Vagina (tissue), 2 donors: ENCODE measurements at regions of chr3 and their contacts with region 1.

Region 1: DNA sequence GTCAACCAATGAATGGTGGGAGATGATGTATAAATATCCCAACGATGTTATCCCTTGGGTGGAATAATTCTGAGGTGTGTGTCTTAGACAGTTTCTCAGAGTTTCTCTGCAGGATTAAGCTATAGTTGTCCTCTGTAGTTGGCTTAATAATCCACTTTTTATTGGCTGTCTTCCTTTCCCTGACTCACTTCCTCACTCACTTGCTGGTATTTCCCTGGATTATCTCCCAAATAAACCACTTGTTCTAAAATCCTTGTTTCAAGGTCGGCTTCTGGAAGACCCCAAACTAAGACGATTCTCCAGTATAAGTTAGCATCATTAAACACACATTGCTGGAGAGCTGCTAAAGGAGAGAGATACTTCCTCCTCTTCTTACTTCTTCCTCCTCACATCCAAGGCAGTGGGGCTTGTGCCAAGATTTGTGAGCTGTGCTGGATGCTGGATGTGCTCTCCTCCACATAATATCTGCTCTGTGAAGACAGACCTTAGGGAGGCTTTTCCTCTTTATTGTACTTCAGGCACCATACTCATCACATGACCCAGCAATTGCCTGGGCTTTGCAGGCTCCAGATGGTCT is 22.5 kb upstream of the ROPN1 start:
- DNase-seq: no peak
- H3K4me3 ChIP-seq: no peak overlapping the region
- H3K27ac ChIP-seq: no peak overlapping the region
- H3K4me1 ChIP-seq: no peaks in the 10 kb centered on the region
- H3K27me3 ChIP-seq: no peaks in the 10 kb centered on the region
- CTCF ChIP-seq: no peak
- POLR2A ChIP-seq: no peak

Region 2: DNA sequence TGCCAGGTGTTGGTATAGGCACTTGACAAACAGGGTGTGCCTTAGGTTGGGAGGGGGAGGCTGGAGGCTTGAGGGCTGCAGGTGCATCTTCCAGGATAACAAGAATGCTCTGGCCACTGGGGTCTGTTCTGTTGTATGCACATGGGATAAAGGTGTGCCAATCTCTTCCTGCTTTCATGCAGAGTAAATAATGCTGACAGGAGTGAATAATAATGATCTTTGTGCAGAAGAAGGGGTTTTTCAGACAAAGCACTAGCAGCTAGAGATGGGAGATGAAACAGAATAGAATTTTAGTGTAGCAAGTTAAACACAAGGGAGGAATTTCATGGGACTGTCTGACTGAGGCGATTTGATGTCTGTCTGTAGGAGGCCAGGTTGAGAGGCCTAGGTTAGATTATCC is 20.6 kb before region 1 on chr3:
- intact Hi-C with region 1: no loop called
- DNase-seq: no peak
- H3K4me3 ChIP-seq: no peak overlapping the region
- H3K27ac ChIP-seq: no peak overlapping the region
- H3K4me1 ChIP-seq: no peaks in the 10 kb centered on the region
- H3K27me3 ChIP-seq: no peaks in the 10 kb centered on the region
- CTCF ChIP-seq: no peak
- POLR2A ChIP-seq: no peak

Region 3: DNA sequence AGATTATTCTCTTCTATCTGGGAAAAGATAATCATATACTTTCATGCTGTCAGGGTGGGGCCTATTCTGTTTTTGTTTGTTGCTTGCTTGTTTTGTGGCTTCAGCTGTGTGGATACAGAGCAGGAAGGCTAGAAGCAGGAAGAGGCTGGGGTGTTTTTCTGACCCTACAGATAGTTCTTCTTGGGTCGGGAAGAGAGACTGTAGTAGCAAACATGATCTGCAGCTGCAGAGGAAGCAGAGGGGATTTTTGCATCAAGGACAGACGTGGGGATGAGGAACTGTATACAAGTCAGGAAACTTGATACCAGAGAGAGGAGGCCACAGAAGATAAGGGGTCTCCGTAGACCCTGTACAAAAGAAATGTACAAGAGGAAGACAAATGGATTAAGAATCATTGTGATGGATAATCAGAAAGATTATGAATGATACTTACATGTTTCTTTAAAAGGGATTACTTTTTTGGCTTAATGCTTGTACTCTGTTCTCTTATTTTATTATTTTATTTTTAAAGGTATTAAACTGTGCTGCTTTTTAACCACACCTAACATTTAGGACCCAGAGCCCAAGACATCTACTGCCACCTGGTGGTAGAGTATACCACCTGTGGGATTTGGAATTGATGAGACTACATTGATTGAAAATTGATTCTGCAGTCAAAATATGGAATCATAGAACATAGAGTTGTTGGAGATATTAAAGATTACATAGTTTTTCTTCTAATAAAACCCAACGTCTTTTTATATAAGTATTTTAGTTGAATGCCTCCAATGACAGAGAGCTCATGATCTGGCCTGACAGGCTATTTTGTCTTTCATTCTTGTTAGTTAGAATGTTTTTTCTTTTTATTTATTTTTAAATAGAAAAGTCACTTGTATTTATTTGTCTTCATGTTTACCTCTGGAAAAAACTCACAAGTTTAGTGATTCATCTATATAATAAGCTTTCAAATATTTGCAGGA is 64.8 kb after region 1 on chr3:
- intact Hi-C with region 1: loop called (anchors 5 kb)
- DNase-seq: peak in 1 of 2 donors; percentile 58
- H3K4me3 ChIP-seq: no peak overlapping the region
- H3K27ac ChIP-seq: no peak overlapping the region
- H3K4me1 ChIP-seq: peaks cover 4% of the 10 kb centered on the region
- H3K27me3 ChIP-seq: no peaks in the 10 kb centered on the region
- CTCF ChIP-seq: peak; percentile 7 to 69 (median 50)
- POLR2A ChIP-seq: no peak

Region 4: DNA sequence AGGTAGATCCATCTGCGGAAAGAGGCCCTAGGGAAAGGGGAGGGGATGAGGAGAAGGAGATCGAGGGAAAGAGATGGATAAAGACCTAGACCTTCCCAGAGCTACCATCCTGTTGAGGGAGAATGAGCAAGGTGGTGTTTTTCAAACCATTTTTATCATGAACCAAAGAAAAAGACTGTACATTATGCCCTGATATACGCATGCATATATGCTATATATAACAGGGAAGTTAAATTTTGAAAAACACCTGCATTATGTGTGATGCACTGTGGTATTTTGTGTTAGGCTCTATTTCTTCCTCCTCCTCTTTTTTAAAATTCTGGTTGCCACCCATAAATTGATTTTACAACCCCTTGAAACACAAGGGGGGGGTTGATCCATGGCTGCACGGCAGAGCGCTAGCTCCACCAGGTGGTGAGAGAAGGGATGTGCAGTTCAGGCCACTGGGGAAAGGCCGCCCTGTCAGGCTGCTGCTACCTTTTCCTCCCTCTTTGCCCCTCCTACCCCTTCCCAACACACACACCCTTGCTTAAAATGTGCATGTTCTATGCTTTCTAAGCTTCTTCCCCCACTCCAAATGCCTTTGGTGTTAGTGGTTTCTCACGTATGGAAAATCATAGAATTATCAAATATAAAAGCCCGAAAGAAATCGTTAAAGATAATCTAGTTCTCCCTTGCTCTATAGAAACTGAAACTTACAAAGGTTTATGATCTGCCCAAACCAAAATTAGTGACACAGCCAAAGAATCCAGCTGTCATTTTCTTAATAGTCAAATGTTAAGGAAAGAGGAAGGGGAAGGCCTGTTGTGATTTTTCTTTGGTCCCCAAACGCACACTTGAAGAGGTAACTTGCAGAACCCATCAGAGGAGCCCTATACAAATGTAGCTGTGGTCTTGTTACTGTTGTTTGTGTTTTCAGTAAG is 453.8 kb after region 1 on chr3:
- intact Hi-C with region 1: loop called (anchors 2 kb)
- DNase-seq: no peak
- H3K4me3 ChIP-seq: no peak overlapping the region
- H3K27ac ChIP-seq: no peak overlapping the region
- H3K4me1 ChIP-seq: no peaks in the 10 kb centered on the region
- H3K27me3 ChIP-seq: no peaks in the 10 kb centered on the region
- CTCF ChIP-seq: peak; percentile 60 to 77 (median 73)
- POLR2A ChIP-seq: no peak

Region 5: GRCh38 chr3:125055913-125056745 is 1041.7 kb after region 1 on chr3 and contains the start of gene HEG1:
- intact Hi-C with region 1: no loop called
- DNase-seq: peak in 1 of 2 donors; percentile 92
- H3K4me3 ChIP-seq: peak within 1 kb of the TSS; percentile 72 to 88
- H3K27ac ChIP-seq: peak within 1 kb of the TSS; percentile 95
- H3K4me1 ChIP-seq: peaks cover 51% of the 10 kb centered on the region
- H3K27me3 ChIP-seq: no peaks in the 10 kb centered on the region
- CTCF ChIP-seq: no peak
- POLR2A ChIP-seq: peak in 1 of 2 donors; percentile 74
- total RNA-seq, gene HEG1: 47.1 TPM

Region 6: DNA sequence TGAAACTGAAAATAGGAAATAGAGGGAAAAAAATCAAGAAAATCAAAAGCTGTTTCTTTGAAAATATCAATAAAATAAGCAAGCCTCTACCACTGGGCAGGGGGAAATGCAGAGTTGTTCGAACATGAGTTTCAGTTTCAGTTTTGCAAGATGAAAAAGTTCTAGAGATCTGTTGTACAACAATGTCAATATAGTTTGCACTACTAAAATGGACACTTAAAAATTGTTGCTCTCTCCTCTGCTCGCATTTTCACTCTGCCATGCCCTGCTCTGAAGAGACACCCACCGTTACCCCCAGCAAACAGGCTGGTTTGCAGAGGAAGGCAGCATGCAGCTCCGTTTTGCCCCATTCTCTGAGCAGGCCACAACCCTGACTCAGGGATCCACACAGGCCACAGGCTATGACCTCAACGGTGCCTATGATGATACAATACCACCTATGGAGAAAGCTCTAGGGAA is 1296.2 kb after region 1 on chr3:
- intact Hi-C with region 1: no loop called
- DNase-seq: no peak
- H3K4me3 ChIP-seq: no peak overlapping the region
- H3K27ac ChIP-seq: no peak overlapping the region
- H3K4me1 ChIP-seq: peaks cover 2% of the 10 kb centered on the region
- H3K27me3 ChIP-seq: no peaks in the 10 kb centered on the region
- CTCF ChIP-seq: no peak
- POLR2A ChIP-seq: no peak